ENCODE measurements at regions of chr19 and their contacts with region 1.

Region 1: GRCh38 chr19:32971715-32972540 is at the starts of genes CEP89 and FAAP24:
- DNase-seq: peak; percentile 100
- H3K4me3 Mint-ChIP-seq: peak within 1 kb of the TSS; percentile 90
- H3K27ac Mint-ChIP-seq: peak within 1 kb of the TSS; percentile 91
- H3K4me1 Mint-ChIP-seq: peaks cover 6% of the 10 kb centered on the region
- H3K27me3 Mint-ChIP-seq: no peaks in the 10 kb centered on the region
- CTCF ChIP-seq: no peak
- total RNA-seq, gene CEP89: 24.7 and 28.4 TPM in 2 replicates
- total RNA-seq, gene FAAP24: 4.1 and 5.1 TPM in 2 replicates

Region 2: GRCh38 chr19:32988724-32989123 is 16.8 kb after region 1 on chr19:
- CTCF ChIA-PET with region 1: interaction called, 10 read pairs
- POLR2A ChIA-PET with region 1: no interaction called
- intact Hi-C with region 1: no loop called
- DNase-seq: no peak
- H3K4me3 Mint-ChIP-seq: no peak overlapping the region
- H3K27ac Mint-ChIP-seq: no peak overlapping the region
- H3K4me1 Mint-ChIP-seq: no peaks in the 10 kb centered on the region
- H3K27me3 Mint-ChIP-seq: no peaks in the 10 kb centered on the region
- CTCF ChIP-seq: no peak

Region 3: DNA sequence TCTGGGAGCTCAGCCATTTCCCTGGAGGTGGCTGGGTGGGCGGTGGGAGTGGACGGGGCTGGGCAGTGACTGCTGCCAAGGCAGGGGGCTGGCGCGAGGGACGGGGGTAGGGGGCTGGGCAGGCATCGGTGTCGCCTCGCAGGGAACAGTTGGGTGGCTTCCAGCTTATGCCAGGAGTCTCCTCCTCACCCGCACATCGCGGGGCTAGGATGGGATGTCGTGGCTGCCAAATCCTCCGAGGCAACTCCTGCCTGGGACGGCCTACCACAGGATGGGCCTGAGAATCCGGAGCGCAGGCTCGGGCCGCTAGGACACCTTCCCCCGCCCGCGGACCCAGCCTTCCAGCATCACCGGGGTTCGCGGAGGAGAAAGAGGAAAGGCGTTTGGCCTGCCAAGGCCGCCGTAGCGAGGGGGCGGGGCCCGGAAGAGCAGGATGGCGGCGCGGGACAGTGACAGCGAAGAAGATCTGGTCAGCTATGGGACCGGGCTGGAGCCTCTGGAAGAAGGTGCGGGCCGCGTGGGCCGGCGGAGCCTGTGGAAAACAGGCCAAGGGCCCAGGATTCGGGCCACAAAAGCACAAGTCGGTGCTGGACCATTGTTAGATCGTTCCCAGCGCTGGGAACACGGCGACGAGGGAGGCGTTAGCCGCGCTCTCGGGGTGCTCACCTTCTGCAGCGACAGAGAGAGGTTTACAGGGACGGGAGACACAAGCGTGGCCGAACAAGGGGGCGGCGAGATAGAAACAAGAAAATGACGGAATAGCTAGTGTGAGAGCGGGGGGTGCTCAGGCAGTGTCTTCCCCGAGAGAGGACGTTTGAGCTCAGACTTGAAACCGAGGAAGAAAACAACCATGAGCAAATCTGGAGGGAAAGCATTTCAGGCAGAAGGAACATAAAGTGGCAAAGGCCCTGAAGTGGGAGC is 109.1 kb after region 1 on chr19 and contains the start of gene GPATCH1:
- CTCF ChIA-PET with region 1: interaction called, 13 read pairs
- POLR2A ChIA-PET with region 1: interaction called, 7 read pairs
- intact Hi-C with region 1: loop called (anchors 1 kb)
- DNase-seq: peak; percentile 90
- H3K4me3 Mint-ChIP-seq: peak within 1 kb of the TSS; percentile 87
- H3K27ac Mint-ChIP-seq: peak within 1 kb of the TSS; percentile 86
- H3K4me1 Mint-ChIP-seq: peaks cover 16% of the 10 kb centered on the region
- H3K27me3 Mint-ChIP-seq: no peaks in the 10 kb centered on the region
- CTCF ChIP-seq: no peak
- total RNA-seq, gene GPATCH1: 5.1 and 6.6 TPM in 2 replicates

Region 4: GRCh38 chr19:33118643-33119042 is 146.7 kb after region 1 on chr19:
- CTCF ChIA-PET with region 1: interaction called, 98 read pairs
- POLR2A ChIA-PET with region 1: interaction called, 5 read pairs
- intact Hi-C with region 1: no loop called
- DNase-seq: no peak
- H3K4me3 Mint-ChIP-seq: no peak overlapping the region
- H3K27ac Mint-ChIP-seq: no peak overlapping the region
- H3K4me1 Mint-ChIP-seq: no peaks in the 10 kb centered on the region
- H3K27me3 Mint-ChIP-seq: no peaks in the 10 kb centered on the region
- CTCF ChIP-seq: no peak

Region 5: GRCh38 chr19:33176670-33177416 is 204.9 kb after region 1 on chr19:
- CTCF ChIA-PET with region 1: interaction called, 3 read pairs
- POLR2A ChIA-PET with region 1: interaction called, 3 read pairs
- intact Hi-C with region 1: loop called (anchors 5 kb)
- DNase-seq: peak; percentile 99
- H3K4me3 Mint-ChIP-seq: peak overlapping the region; percentile 93
- H3K27ac Mint-ChIP-seq: peak overlapping the region; percentile 66
- H3K4me1 Mint-ChIP-seq: peaks cover 9% of the 10 kb centered on the region
- H3K27me3 Mint-ChIP-seq: no peaks in the 10 kb centered on the region
- CTCF ChIP-seq: no peak

Measured in MCF 10A (cell line).